AG04449 (cell line): ENCODE measurements at regions of chr12 and their contacts with region 1.

Region 1: DNA sequence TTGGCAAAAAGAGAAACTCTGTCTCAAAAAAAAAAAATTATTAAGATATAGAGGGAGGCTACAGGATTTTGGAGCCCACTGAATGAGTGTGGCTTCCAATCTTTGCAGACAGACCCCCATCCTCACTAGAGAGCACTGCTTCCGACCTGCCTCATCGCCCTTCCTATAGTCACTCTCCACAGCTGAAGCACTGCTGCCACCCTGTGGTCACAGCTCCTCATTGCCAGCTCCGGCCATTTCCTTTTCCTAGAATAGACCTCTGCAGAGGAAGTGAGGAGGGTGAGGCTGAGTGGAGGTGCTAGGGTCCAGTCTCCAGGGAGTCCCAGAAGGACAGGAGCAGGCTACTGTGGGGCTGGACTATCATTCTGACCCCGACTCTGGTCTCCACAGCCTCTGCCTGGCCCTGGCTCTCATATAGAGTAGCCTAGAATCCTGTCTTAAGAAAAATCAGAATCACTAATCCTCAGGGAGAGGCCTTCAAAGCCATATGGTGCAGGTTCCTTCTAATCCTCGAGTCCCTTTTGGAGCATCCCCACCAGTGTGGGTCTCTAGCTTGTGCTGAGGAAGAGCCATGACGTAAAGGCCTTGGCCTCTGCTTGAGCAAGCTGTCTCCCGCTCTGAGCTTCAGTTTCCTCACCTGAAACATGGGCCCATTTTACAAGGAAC is 1.4 kb upstream of the NPFF start:
- DNase-seq: no peak
- H3K4me3 ChIP-seq: no peak overlapping the region
- CTCF ChIP-seq: peak; percentile 95

Region 2: DNA sequence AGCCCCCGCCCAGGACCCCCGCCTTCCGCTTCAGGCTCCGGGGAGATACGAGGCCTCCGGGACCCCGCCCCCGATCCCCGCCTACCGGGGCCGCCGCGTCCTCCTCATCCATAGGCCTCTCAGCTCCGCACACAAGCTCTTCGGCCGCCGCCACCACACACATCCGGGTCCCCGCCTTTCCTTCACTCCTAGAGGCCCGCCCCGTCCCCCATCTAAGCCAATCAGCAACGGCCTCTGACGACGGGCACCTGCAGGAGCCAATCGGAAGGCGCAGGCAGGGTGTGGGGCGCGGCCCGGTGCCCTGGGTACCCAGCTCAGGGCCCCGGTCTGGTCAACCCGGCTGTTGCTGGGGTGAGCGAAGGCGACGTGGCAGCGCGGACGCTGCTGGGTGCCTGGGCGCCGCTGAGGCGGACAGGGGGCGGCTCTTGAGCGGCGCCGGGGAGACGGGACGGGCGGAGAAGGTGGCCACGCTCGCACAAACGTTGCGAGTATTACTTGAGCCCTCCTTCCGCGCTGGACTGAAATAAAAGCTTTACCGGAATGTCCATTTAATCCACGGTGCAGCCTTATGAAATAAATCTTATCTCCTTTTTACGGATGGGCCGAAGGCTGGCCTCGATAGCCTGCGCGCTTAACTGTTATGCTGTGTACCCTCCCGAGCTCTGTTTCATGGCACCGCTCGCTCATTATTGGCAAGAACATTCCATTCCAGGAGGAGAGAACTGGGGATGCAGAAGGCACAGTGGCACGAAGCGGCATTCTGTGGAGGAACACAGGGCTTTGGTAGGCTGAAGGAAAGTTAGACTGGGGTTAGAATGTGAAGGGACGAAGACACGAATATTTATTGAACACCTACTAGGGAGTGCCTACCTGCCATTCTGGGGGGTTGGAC is 429.2 kb before region 1 on chr12 and contains the start of gene SPRYD3:
- CTCF ChIA-PET with region 1: no interaction called
- POLR2A ChIA-PET with region 1: no interaction called
- DNase-seq: peak; percentile 80
- H3K4me3 ChIP-seq: peak within 1 kb of the TSS; percentile 76
- CTCF ChIP-seq: no peak

Region 3: GRCh38 chr12:53279283-53279869 is 229.3 kb before region 1 on chr12:
- CTCF ChIA-PET with region 1: no interaction called
- POLR2A ChIA-PET with region 1: no interaction called
- DNase-seq: no peak
- H3K4me3 ChIP-seq: no peak overlapping the region
- CTCF ChIP-seq: no peak

Region 4: DNA sequence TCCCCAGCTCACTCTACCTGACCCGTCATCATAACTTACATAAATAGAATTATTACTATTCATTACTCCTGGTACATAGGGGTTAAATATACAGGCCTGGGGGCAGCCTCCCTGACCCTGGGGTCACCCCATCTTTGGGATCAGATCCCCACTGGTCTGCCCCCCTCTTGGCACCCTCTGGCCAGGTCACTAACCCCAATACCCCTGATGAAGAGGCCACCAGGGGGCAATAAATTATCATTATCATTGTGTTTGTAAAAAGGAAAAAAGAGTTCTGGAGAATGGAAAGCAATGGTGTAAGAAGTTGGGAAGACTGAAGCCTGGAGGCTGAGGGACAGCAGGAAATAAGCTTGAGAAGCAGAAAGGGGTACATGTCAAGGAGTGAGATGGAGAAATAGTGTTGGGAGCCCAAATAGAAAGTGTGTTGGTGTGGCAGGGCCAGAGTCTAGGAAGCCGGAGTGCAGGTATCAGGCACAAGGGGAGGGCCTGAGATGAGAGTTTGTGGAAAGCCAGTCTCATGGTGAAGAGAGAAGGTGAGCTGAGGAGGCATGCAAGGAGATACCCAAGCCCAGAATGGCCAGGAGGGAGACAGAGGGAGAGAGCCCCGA is 181.1 kb before region 1 on chr12:
- CTCF ChIA-PET with region 1: interaction called, 135 read pairs
- POLR2A ChIA-PET with region 1: no interaction called
- DNase-seq: no peak
- H3K4me3 ChIP-seq: no peak overlapping the region
- CTCF ChIP-seq: no peak

Region 5: GRCh38 chr12:53344824-53345485 is 163.7 kb before region 1 on chr12:
- CTCF ChIA-PET with region 1: interaction called, 35 read pairs
- POLR2A ChIA-PET with region 1: no interaction called
- DNase-seq: no peak
- H3K4me3 ChIP-seq: peak overlapping the region; percentile 70
- CTCF ChIP-seq: peak; percentile 89

Region 6: DNA sequence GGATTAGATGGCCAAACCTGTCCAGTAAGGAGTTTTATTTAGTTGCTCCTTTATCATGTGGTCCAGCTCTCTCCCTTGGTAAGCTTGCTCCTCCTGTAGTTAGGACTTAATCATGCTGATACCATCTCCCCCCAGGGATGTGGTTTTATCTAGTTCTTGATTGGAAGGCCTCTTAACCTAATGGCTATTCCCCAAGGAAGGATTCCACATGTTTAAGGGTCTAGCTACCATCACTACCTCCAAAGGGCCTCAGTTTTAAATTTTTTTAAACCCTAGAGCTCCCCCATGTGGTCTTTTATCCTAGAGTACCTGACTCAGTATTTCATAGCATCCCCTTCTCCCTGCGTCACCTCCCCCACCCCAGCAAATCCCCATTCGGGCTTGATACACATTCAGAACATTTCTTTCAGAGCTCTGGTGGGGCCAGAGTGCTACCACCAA is 31.9 kb before region 1 on chr12:
- CTCF ChIA-PET with region 1: interaction called, 99 read pairs
- POLR2A ChIA-PET with region 1: interaction called, 6 read pairs
- DNase-seq: no peak
- H3K4me3 ChIP-seq: no peak overlapping the region
- CTCF ChIP-seq: no peak

Region 7: GRCh38 chr12:53492830-53493611 is 15.6 kb before region 1 on chr12:
- CTCF ChIA-PET with region 1: interaction called, 33 read pairs
- POLR2A ChIA-PET with region 1: no interaction called
- DNase-seq: no peak
- H3K4me3 ChIP-seq: peak overlapping the region; percentile 61
- CTCF ChIP-seq: no peak

Region 8: GRCh38 chr12:53530920-53531319 is 22.3 kb after region 1 on chr12:
- CTCF ChIA-PET with region 1: interaction called, 11 read pairs
- POLR2A ChIA-PET with region 1: no interaction called
- DNase-seq: no peak
- H3K4me3 ChIP-seq: no peak overlapping the region
- CTCF ChIP-seq: no peak

Region 9: GRCh38 chr12:53561590-53561953 is 52.9 kb after region 1 on chr12:
- CTCF ChIA-PET with region 1: no interaction called
- POLR2A ChIA-PET with region 1: no interaction called
- DNase-seq: peak; percentile 72
- H3K4me3 ChIP-seq: no peak overlapping the region; the same call in 1 of the 2 replicates
- CTCF ChIP-seq: no peak